Mammary epithelial cell (primary cell): ENCODE measurements at regions of chr14 and their contacts with region 1.

Region 1: GRCh38 chr14:71745072-71745471 is 187.2 kb upstream of the RGS6 start:
- DNase-seq: no peak
- H3K4me3 ChIP-seq: no peak overlapping the region
- H3K27ac ChIP-seq: no peak overlapping the region
- H3K4me1 ChIP-seq: peaks cover 3% of the 10 kb centered on the region
- H3K27me3 ChIP-seq: no peaks in the 10 kb centered on the region
- CTCF ChIP-seq: no peak

Region 2: GRCh38 chr14:71113376-71113775 is 631.7 kb before region 1 on chr14:
- CTCF ChIA-PET with region 1: interaction called, 15 read pairs
- dilution Hi-C with region 1: no loop called
- in situ Hi-C with region 1: no loop called
- intact Hi-C with region 1: no loop called
- DNase-seq: no peak
- H3K4me3 ChIP-seq: no peak overlapping the region
- H3K27ac ChIP-seq: no peak overlapping the region
- H3K4me1 ChIP-seq: peaks cover 14% of the 10 kb centered on the region
- H3K27me3 ChIP-seq: no peaks in the 10 kb centered on the region
- CTCF ChIP-seq: no peak